A549 (cell line): ENCODE measurements at regions of chr1 and their contacts with region 1.

Region 1: GRCh38 chr1:21368515-21369289 is 71.2 kb upstream of the NBPF3 start:
- DNase-seq: peak; percentile 37 to 78
- ATAC-seq: peak; percentile 96 to 97
- H3K4me3 ChIP-seq: no peak overlapping the region
- H3K27ac ChIP-seq: peak overlapping the region; percentile 32 to 65; a peak in 4 of 6 replicates
- H3K4me1 ChIP-seq: peaks cover 4% of the 10 kb centered on the region; the same call in 1 of the 3 replicates
- CTCF ChIP-seq: peak; percentile 94
- EP300 ChIP-seq: no peak
- POLR2A ChIP-seq: no peak
- RAD21 ChIP-seq: peak; percentile 99 to 100

Region 2: DNA sequence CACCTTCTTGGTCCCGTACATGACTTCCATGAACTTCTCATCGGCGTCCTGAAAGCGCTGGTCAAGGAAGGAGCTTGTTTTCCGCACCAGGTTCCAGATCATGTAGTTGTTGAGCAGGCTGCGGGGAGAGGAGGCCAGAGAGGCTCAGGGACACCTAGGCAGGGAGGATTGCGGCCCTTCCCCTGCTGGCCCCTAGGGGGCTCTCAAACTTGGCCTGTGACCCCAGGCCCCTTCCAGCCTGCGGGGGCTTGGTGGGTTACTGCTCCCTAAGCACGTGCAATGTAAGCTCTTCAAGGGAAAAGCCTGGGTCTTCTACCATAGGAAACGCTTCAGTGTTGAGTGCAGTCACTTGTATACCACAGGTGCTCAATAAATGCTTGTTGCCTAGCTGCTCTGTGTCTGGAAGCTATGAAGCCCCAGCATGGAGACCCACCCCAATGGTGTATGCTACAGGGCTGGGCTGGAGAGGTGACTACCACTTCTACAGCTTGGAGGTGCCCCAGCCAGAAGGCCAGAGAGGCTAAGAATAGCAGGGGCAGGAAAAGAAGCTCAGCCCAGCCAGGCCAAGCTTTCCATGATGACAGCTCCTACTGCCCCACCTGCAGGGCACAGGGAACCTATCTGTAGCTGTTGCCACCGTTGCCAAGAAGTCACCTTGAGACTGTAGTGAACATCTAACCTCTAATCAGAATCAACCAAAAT is 123.6 kb before region 1 on chr1:
- CTCF ChIA-PET with region 1: interaction called, 82 read pairs
- POLR2A ChIA-PET with region 1: no interaction called
- DNase-seq: no peak
- ATAC-seq: peak in 1 of 2 experiments; percentile 70; a peak in 3 of 6 replicates
- H3K4me3 ChIP-seq: no peak overlapping the region
- H3K27ac ChIP-seq: no peak overlapping the region
- H3K4me1 ChIP-seq: peaks cover 6% of the 10 kb centered on the region; the same call in 1 of the 3 replicates
- CTCF ChIP-seq: peak; percentile 30; the same call in 1 of the 3 replicates
- EP300 ChIP-seq: no peak
- POLR2A ChIP-seq: no peak
- RAD21 ChIP-seq: no peak

Region 3: GRCh38 chr1:21293537-21294265 is 75.0 kb before region 1 on chr1:
- CTCF ChIA-PET with region 1: interaction called, 17 read pairs
- POLR2A ChIA-PET with region 1: no interaction called
- DNase-seq: no peak
- ATAC-seq: no peak
- H3K4me3 ChIP-seq: no peak overlapping the region
- H3K27ac ChIP-seq: peak overlapping the region in 1 of 2 experiments; percentile 59; a peak in 3 of 6 replicates
- H3K4me1 ChIP-seq: peaks cover 51% of the 10 kb centered on the region
- CTCF ChIP-seq: no peak
- EP300 ChIP-seq: no peak
- POLR2A ChIP-seq: no peak
- RAD21 ChIP-seq: no peak

Region 4: GRCh38 chr1:21355956-21356355 is 12.7 kb before region 1 on chr1:
- CTCF ChIA-PET with region 1: interaction called, 26 read pairs
- POLR2A ChIA-PET with region 1: no interaction called
- DNase-seq: no peak
- ATAC-seq: peak in 1 of 2 experiments; percentile 71; a peak in 2 of 6 replicates
- H3K4me3 ChIP-seq: no peak overlapping the region
- H3K27ac ChIP-seq: no peak overlapping the region
- H3K4me1 ChIP-seq: no peaks in the 10 kb centered on the region
- CTCF ChIP-seq: no peak
- EP300 ChIP-seq: no peak
- POLR2A ChIP-seq: no peak
- RAD21 ChIP-seq: no peak

Region 5: DNA sequence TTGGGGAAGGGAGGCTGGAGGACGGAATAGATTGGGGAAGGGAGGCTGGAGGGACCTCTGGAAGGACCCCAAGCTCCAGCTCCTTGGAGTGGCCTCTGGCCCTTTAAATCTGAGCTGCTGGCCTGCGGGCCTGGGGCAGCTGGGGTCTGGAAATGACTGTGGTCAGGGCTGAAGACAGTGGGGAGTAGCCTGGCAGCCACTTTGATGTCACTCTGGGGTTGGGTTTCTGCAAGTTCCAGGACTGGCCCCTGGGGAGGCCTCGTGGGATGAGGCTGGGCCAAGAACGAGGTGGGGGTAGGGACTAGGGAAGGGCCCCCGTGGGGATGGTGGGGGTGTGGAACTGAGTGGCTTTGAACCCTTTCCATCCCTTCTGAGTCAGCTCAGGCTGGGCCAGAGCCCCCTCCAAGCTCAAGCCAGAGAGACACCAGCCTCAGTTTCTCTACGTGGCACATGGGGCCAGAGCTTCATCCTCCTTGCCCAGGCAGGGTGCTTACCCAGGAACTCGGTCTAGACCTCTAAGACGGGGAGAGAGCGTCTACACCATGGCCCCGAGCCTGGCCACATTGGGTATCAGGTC is 200.2 kb after region 1 on chr1:
- CTCF ChIA-PET with region 1: interaction called, 17 read pairs
- POLR2A ChIA-PET with region 1: no interaction called
- DNase-seq: no peak
- ATAC-seq: no peak
- H3K4me3 ChIP-seq: no peak overlapping the region
- H3K27ac ChIP-seq: no peak overlapping the region
- H3K4me1 ChIP-seq: no peaks in the 10 kb centered on the region
- CTCF ChIP-seq: no peak
- EP300 ChIP-seq: no peak
- POLR2A ChIP-seq: no peak
- RAD21 ChIP-seq: no peak